B cell (primary cell): ENCODE measurements at regions of chr1 and their contacts with region 1.

Region 1: DNA sequence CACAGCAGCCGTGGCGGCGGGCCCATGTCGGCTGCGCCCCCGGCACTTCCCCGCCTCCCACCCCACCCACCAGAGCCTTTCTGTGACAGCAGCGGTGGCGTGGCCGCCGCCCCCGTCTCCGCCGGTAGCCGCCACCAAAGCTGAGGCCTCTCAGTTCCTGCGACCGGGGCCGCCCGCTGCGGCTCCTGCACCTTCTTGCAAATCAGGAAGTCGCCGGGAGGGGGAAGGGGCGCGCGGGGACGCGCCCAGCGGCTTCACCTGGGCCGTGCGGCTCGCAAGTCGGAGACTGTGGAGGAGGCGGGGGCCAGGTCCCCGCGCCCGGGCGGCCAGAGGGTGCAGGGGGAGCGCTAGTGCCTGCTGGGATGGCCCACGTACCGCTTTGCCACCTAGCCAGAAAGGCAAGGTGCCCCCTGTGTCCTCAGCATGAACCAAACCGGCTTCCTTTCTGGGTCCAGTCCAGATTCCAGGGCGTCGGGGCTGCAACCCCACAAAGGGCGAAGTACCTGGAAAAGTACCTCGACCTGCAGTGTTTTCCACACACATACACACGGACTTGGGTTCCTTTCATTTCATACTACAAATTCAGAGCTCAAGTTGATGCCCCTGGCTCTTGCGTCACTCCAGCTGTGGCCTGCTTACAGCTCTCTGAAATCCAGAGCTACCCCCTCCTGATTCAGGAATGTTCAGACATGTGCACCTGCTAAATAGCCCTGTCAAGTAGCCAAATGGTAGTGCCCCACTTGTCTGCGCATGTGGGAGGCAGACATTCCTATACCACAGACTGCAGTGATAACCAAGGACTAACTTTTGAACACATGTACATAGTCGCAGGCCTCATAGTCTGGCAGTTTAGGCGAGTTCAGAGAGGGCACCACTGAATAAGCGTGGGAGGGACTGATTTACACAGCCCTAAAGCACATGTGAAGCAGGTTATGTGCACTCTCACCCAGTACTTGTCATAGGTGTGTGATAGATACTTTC is at the start of gene DENND1B:
- DNase-seq: peak; percentile 90
- ATAC-seq: peak; percentile 74
- H3K4me3 ChIP-seq: peak within 1 kb of the TSS; percentile 55 to 78 (median 67)
- H3K4me3 Mint-ChIP-seq: peak within 1 kb of the TSS; percentile 89
- H3K27ac ChIP-seq: peak within 1 kb of the TSS; percentile 86 to 89
- H3K27ac Mint-ChIP-seq: peak within 1 kb of the TSS; percentile 99
- H3K4me1 ChIP-seq: peaks cover 28 to 47% of the 10 kb centered on the region in 2 donors
- H3K4me1 Mint-ChIP-seq: peaks cover 68% of the 10 kb centered on the region
- H3K27me3 ChIP-seq: no peaks in the 10 kb centered on the region
- H3K27me3 Mint-ChIP-seq: no peaks in the 10 kb centered on the region
- CTCF ChIP-seq: peak; percentile 15
- total RNA-seq, gene DENND1B: 24.8 and 25.4 TPM in 2 replicates

Region 2: DNA sequence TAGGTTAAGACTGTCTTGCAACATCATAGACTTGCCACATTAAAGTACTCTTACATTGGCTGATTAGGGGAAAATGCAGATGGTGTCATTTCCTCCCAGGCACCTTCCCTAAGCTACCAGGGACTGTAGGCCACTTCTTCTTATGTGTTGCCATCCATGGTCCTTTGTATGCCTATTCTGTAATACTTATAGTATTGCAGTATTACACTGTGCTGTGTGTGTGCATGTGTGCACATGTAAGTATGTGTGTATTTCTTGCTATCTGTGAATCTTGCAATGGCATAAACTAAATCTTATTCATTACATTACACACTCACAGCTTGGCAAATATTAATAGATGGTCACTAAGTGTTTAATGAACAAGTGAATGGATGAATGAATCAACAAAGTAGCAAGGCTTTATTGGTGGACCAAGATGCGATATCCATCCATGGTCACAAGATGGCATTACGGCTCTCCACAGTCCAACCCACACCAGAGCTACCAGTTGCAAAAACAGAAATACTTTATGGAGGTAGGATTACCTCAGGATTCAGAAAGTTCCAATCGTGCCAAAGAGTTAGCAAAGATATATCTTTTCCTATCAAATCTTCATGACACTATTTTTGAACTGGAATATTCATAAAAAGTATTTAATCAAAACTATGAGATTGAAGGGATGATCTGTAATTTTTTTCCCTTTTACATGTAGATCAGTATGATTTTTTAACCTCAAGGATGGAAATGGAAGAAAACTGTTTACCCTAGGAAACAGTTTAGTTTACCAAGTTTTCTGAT is 160.5 kb before region 1 on chr1:
- CTCF ChIA-PET with region 1: no interaction called
- POLR2A ChIA-PET with region 1: no interaction called
- intact Hi-C with region 1: loop called (anchors 10 kb)
- DNase-seq: peak; percentile 42
- ATAC-seq: peak; percentile 49
- H3K4me3 ChIP-seq: no peak overlapping the region
- H3K4me3 Mint-ChIP-seq: no peak overlapping the region
- H3K27ac ChIP-seq: no peak overlapping the region
- H3K27ac Mint-ChIP-seq: no peak overlapping the region
- H3K4me1 ChIP-seq: no peaks in the 10 kb centered on the region
- H3K4me1 Mint-ChIP-seq: no peaks in the 10 kb centered on the region
- H3K27me3 ChIP-seq: no peaks in the 10 kb centered on the region
- H3K27me3 Mint-ChIP-seq: no peaks in the 10 kb centered on the region
- CTCF ChIP-seq: peak; percentile 70

Region 3: GRCh38 chr1:197761621-197762020 is 14.0 kb before region 1 on chr1:
- CTCF ChIA-PET with region 1: interaction called, 5 read pairs
- POLR2A ChIA-PET with region 1: no interaction called
- intact Hi-C with region 1: loop called (anchors 2 kb)
- DNase-seq: peak; percentile 20
- ATAC-seq: peak; percentile 58
- H3K4me3 ChIP-seq: peak overlapping the region in 1 of 5 experiments; percentile 48
- H3K4me3 Mint-ChIP-seq: peak overlapping the region; percentile 63
- H3K27ac ChIP-seq: no peak overlapping the region
- H3K27ac Mint-ChIP-seq: no peak overlapping the region
- H3K4me1 ChIP-seq: peaks cover 4 to 5% of the 10 kb centered on the region in 2 donors
- H3K4me1 Mint-ChIP-seq: peaks cover 25% of the 10 kb centered on the region
- H3K27me3 ChIP-seq: no peaks in the 10 kb centered on the region
- H3K27me3 Mint-ChIP-seq: no peaks in the 10 kb centered on the region
- CTCF ChIP-seq: no peak